Posterior cingulate gyrus (tissue), 11 donors: ENCODE measurements at regions of chr12 and their contacts with region 1.

Region 1: GRCh38 chr12:80269803-80270552 is 170.6 kb downstream of the OTOGL start:
- DNase-seq: peak in 1 of 10 donors; percentile 31

Region 2: GRCh38 chr12:80195074-80195726 is 74.8 kb before region 1 on chr12:
- intact Hi-C with region 1: loop called (anchors 5 kb)
- DNase-seq: peak in 1 of 10 donors; percentile 9

Region 3: GRCh38 chr12:80504369-80505163 is 234.6 kb after region 1 on chr12:
- intact Hi-C with region 1: no loop called
- DNase-seq: no peak